BJ (cell line): ENCODE measurements at regions of chr4 and their contacts with region 1.

Region 1: GRCh38 chr4:122548452-122548851 is 72.4 kb downstream of the IL21 start:
- DNase-seq: no peak
- H3K4me3 ChIP-seq: no peak overlapping the region
- H3K27me3 ChIP-seq: no peaks in the 10 kb centered on the region
- CTCF ChIP-seq: no peak

Region 2: DNA sequence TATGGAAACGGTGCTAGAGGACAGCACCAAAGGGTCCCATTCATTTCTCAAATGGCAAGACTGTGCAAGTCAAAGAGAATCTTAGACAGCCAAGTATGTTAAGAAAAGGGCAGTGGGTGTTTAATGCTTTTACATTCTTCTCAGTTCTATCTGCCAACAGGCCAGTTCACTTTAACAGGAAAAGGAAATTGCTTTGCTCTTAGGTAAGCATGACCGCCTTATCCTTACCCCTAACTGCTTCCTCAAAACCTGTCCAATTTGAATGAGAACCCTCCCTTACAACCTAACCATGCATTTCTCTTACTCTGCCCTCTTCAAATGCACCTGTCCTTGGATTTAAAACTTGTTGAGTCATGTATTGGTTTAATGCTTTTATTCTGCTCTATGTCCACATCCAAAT is 440.8 kb before region 1 on chr4:
- CTCF ChIA-PET with region 1: no interaction called
- POLR2A ChIA-PET with region 1: no interaction called
- DNase-seq: no peak
- H3K4me3 ChIP-seq: no peak overlapping the region
- H3K27me3 ChIP-seq: no peaks in the 10 kb centered on the region
- CTCF ChIP-seq: no peak

Region 3: GRCh38 chr4:122293374-122294365 is 254.8 kb before region 1 on chr4:
- CTCF ChIA-PET with region 1: no interaction called
- POLR2A ChIA-PET with region 1: interaction called, 12 read pairs
- DNase-seq: no peak
- H3K4me3 ChIP-seq: no peak overlapping the region
- H3K27me3 ChIP-seq: no peaks in the 10 kb centered on the region
- CTCF ChIP-seq: no peak